Panc1 (cell line): ENCODE measurements at regions of chr11 and their contacts with region 1.

Region 1: GRCh38 chr11:12288212-12288930 is 89.0 kb upstream of the PARVA start:
- DNase-seq: peak; percentile 55
- ATAC-seq: peak; percentile 70
- H3K4me3 ChIP-seq: no peak overlapping the region; a peak in 1 of 4 replicates
- H3K27ac ChIP-seq: peak overlapping the region; percentile 76
- H3K4me1 ChIP-seq: peaks cover 43% of the 10 kb centered on the region
- H3K27me3 ChIP-seq: no peaks in the 10 kb centered on the region
- CTCF ChIP-seq: peak; percentile 96

Region 2: DNA sequence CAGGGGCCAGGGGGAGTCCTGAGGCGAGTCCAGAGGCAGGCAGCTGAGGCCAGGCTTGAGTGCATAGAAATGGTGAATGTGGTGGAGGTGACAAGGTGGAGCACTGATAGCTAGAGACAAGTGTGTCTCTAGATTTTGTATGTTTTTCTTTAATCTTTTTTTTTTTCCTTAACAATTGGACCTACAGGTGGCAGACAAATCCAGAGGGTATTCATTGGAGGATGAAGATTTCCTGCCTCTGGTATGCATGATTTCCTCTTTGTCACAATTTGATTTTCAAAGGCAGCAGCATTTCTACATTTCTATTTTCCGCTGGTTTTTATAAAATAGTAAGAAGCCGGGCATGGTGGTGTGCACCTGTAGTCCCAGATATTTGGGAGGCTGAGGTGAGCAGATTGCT is 232.2 kb before region 1 on chr11:
- CTCF ChIA-PET with region 1: interaction called, 12 read pairs
- POLR2A ChIA-PET with region 1: no interaction called
- in situ Hi-C with region 1: no loop called
- intact Hi-C with region 1: no loop called
- DNase-seq: no peak
- ATAC-seq: no peak
- H3K4me3 ChIP-seq: no peak overlapping the region
- H3K27ac ChIP-seq: no peak overlapping the region
- H3K4me1 ChIP-seq: peaks cover 9% of the 10 kb centered on the region
- H3K27me3 ChIP-seq: no peaks in the 10 kb centered on the region
- CTCF ChIP-seq: no peak

Region 3: GRCh38 chr11:12331239-12331874 is 43.0 kb after region 1 on chr11:
- CTCF ChIA-PET with region 1: interaction called, 10 read pairs
- POLR2A ChIA-PET with region 1: no interaction called
- in situ Hi-C with region 1: no loop called
- intact Hi-C with region 1: no loop called
- DNase-seq: peak; percentile 71
- ATAC-seq: peak; percentile 94
- H3K4me3 ChIP-seq: no peak overlapping the region
- H3K27ac ChIP-seq: no peak overlapping the region
- H3K4me1 ChIP-seq: no peaks in the 10 kb centered on the region
- H3K27me3 ChIP-seq: no peaks in the 10 kb centered on the region
- CTCF ChIP-seq: peak; percentile 85